ENCODE measurements at regions of chr2 and their contacts with region 1.

Region 1: DNA sequence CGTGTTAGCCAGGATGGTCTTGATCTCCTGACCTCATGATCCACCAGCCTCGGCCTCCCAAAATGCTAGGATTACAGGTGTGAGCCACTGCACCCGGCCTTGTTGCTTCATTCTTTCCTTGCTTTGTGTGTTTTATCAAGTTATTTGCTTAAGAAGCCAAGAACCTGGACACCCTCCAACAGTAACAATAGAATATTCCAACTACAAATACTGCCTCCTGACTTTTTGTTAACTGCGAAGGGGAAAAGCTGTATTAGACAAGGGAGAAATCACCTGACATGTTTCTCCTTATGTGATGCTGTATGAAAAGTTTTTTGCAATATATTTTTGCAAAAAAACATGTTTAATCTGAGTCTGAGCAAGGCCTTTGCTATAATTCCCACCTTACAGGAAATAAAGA is 297.1 kb downstream of the NCKAP5 start:
- DNase-seq: no peak
- ATAC-seq: no peak
- H3K4me3 ChIP-seq: no peak overlapping the region
- H3K27ac ChIP-seq: no peak overlapping the region
- H3K4me1 ChIP-seq: no peaks in the 10 kb centered on the region
- H3K27me3 ChIP-seq: peaks cover 0 to 7% (median 0%) of the 10 kb centered on the region in 3 donors
- CTCF ChIP-seq: no peak

Region 2: DNA sequence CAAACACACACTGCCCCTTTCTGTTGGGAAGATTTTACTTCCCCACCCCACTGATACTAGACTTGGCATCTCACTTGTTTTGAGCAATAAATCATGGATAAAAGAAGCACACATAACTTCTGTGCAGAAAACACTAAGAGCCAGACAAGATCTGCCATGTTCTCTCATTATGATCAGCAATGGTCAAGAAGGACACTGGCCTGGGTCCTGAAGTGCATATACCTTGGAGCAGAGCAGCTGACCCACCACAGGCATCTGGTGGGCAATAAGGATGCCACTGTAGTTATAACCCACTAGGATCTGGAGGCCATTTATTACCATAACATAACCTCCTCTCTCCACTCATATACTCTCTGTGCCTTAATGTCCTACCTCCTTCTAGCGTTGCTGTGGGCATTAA is 41.2 kb before region 1 on chr2:
- intact Hi-C with region 1: loop called in 1 of 2 experiments (anchors 5 kb)
- DNase-seq: no peak
- ATAC-seq: no peak
- H3K4me3 ChIP-seq: no peak overlapping the region
- H3K27ac ChIP-seq: no peak overlapping the region
- H3K4me1 ChIP-seq: no peaks in the 10 kb centered on the region
- H3K27me3 ChIP-seq: no peaks in the 10 kb centered on the region
- CTCF ChIP-seq: no peak

Region 3: GRCh38 chr2:133247631-133248030 is 23.5 kb before region 1 on chr2:
- intact Hi-C with region 1: no loop called
- DNase-seq: no peak
- ATAC-seq: peak in 1 of 4 donors; percentile 40
- H3K4me3 ChIP-seq: no peak overlapping the region
- H3K27ac ChIP-seq: no peak overlapping the region
- H3K4me1 ChIP-seq: no peaks in the 10 kb centered on the region
- H3K27me3 ChIP-seq: no peaks in the 10 kb centered on the region
- CTCF ChIP-seq: no peak

Region 4: GRCh38 chr2:133346654-133347053 is 75.5 kb after region 1 on chr2:
- intact Hi-C with region 1: no loop called
- DNase-seq: no peak
- ATAC-seq: no peak
- H3K4me3 ChIP-seq: no peak overlapping the region
- H3K27ac ChIP-seq: no peak overlapping the region
- H3K4me1 ChIP-seq: no peaks in the 10 kb centered on the region
- H3K27me3 ChIP-seq: no peaks in the 10 kb centered on the region
- CTCF ChIP-seq: no peak

Region 5: GRCh38 chr2:133362061-133362476 is 90.9 kb after region 1 on chr2:
- intact Hi-C with region 1: no loop called
- DNase-seq: no peak
- ATAC-seq: no peak
- H3K4me3 ChIP-seq: no peak overlapping the region
- H3K27ac ChIP-seq: no peak overlapping the region
- H3K4me1 ChIP-seq: no peaks in the 10 kb centered on the region
- H3K27me3 ChIP-seq: no peaks in the 10 kb centered on the region
- CTCF ChIP-seq: no peak

Region 6: DNA sequence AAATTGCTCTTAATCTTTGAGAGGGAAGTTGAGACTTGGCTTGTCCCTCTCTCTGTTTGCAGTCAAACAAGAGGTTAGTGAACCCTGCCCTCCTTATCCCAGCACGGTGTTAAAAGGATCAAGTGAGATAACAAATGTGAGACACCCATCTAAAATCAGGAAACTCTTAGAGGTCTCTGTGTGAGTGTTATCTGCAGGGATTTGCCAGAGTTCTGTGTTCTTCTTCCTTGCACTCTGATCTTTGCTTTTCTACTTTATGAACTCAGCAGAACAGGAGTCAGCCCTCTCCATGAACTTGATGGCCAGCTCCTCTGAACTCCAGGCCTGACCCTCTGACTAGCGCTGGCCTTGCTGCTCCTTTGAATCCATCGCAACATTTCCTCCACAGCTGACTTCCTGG is 173.3 kb after region 1 on chr2:
- intact Hi-C with region 1: no loop called
- DNase-seq: no peak
- ATAC-seq: no peak
- H3K4me3 ChIP-seq: no peak overlapping the region
- H3K27ac ChIP-seq: no peak overlapping the region
- H3K4me1 ChIP-seq: no peaks in the 10 kb centered on the region
- H3K27me3 ChIP-seq: no peaks in the 10 kb centered on the region
- CTCF ChIP-seq: no peak